ENCODE measurements at regions of chr1 and their contacts with region 1.

Region 1: GRCh38 chr1:155859234-155859829 is at the start of gene SYT11:
- DNase-seq: peak; percentile 86
- H3K4me3 ChIP-seq: peak within 1 kb of the TSS; percentile 65
- H3K27ac ChIP-seq: peak within 1 kb of the TSS; percentile 92
- H3K27me3 ChIP-seq: no peaks in the 10 kb centered on the region
- CTCF ChIP-seq: 0 out of 2 replicates have a peak, but pooled peaks have one; percentile 3
- polyA plus RNA-seq, gene SYT11: 44.8 and 49.0 TPM in 2 replicates

Region 2: DNA sequence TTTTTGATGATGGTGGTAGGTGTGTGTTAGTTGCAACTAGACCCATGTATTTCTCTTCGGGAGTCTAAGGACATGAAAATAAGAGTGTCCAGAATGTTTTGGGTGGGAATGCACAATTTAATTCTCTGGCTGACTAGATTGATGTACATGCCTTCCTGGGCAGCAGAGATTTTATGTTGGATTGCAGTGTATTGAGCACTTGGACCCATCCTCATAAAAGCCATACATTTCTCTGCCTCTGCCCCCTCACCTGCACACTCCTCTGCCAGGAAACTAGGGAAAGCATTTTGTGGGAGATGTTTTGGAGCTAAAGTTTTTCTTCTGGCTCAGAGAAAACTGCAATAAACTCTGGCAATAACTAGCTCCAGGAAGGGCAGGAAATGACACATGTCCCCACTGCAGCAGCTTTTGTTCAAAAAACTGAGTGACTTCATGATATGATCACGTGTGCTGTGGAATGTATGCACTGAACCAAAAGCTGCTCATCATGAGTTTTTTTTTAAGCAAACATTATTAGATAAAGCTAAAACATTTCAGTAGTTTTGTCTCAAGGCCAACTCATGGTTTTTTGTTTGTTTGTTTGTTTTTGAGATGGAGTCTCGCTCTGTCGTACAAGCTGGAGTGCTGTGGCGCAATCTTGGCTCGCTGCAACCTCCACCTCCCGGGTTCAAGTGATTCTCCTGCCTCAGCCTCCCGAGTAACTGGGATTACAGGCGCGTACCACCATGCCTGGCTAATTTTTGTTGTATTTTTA is 34.2 kb after region 1 on chr1:
- CTCF ChIA-PET with region 1: no interaction called
- POLR2A ChIA-PET with region 1: interaction called, 13 read pairs
- DNase-seq: peak; percentile 49
- H3K4me3 ChIP-seq: no peak overlapping the region
- H3K27ac ChIP-seq: peak overlapping the region; percentile 85
- H3K27me3 ChIP-seq: no peaks in the 10 kb centered on the region
- CTCF ChIP-seq: no peak